Posterior cingulate gyrus (tissue), 11 donors: ENCODE measurements at regions of chr3 and their contacts with region 1.

Region 1: DNA sequence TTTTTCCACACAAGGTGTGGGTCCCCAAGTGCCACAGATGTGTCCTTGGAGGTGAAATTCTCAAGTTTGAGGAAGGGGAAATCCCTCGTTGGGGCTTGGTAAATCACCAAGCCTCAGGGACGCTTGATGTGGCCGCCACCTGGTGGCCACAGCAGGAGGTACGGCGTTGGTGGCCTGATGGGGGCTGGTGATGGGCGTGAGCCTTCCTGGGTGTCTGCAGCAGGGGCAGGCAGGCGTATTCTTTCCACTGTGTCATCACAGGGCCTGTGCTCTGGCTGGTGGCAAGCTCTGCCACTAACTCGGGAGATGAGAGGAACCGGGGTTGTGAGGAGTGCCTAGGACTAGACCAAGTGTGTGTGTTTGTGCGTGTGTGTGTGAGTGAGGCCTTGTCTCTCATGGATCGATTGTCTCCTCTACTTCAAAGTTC is 4.2 kb downstream of the ACOX2 start:
- DNase-seq: peak; percentile 49 to 96 (median 76)

Region 2: DNA sequence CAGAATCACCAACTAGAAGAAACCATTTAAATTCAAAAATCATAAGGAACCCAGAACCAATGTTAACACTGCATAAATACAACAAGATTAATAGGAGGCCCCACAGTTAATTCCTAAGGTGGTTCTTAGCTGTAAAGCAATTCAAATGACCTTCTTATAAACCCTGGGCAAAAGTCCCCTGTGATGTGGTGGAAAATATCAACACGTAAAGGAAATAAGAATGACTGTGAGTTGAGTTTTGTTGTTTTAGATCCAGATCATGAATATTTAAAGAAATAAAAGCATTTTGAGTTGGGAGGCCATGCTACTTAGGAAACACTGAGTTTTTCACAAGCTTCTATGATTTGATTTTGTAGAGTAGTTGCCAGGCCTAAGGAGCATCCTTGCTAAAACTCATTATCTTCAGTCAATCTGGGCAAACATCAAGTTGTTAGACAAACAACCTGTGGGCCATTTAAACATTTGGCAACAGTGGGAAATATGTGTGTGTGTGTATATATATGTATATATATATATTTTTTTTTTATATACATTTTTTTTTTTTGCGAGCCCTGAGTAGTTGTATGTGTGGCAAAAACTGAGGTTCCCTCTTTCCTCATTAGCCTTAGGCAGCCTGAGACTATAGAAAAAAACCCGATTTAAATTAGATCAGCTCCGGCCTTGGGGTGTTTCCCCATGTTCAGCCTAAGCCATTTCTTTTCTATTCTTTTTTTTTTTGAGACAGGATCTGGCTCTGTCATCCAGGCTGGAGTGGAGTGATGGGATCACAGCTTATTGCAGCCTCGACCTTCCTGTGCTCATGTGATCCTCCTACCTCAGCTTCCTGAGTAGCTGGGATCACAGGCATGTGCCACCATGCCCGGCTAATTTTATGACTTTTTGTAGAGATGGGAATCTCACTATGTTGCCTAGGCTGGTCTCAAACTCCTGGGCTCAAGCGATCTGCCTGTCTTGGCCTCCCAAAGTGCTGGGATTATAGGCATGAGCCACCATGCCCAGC is 208.1 kb before region 1 on chr3:
- intact Hi-C with region 1: loop called (anchors 5 kb)
- DNase-seq: no peak

Region 3: DNA sequence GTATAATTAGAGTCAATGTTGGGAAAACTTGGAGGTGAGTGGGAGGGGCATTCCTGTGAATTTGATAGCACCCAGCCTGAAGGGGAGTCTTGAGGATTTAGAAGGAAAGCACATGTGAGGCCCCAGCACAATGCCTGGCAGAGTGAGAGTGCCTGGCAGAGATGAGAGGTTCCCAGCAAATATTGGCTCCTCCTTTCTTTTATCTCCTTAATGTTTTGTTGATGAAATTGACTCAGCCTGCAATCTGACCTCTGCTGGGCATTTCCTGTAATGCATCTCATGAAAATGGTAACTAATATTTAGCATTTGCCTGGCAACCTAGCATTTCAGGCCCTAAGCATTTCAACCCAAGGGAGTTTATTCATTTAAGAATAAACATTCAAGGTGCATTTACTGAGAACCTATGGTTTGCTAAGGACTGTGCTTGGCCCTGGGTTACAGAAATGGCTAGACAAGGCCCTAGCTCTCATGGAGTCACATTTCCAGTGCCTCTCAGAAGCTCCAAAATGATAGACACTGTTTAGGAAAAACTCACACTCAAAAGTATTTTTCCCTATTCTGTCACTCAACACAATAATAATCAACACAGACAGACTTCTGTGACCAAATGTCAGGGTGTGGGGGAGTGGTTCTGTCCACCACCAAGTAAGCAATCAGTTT is 118.1 kb before region 1 on chr3:
- intact Hi-C with region 1: loop called (anchors 10 kb)
- DNase-seq: peak in 3 of 10 donors; percentile 27 to 65 (median 38)

Region 4: GRCh38 chr3:58463181-58463941 is 69.4 kb before region 1 on chr3:
- intact Hi-C with region 1: loop called (anchors 1 kb)
- DNase-seq: peak; percentile 50 to 95 (median 70)

Region 5: DNA sequence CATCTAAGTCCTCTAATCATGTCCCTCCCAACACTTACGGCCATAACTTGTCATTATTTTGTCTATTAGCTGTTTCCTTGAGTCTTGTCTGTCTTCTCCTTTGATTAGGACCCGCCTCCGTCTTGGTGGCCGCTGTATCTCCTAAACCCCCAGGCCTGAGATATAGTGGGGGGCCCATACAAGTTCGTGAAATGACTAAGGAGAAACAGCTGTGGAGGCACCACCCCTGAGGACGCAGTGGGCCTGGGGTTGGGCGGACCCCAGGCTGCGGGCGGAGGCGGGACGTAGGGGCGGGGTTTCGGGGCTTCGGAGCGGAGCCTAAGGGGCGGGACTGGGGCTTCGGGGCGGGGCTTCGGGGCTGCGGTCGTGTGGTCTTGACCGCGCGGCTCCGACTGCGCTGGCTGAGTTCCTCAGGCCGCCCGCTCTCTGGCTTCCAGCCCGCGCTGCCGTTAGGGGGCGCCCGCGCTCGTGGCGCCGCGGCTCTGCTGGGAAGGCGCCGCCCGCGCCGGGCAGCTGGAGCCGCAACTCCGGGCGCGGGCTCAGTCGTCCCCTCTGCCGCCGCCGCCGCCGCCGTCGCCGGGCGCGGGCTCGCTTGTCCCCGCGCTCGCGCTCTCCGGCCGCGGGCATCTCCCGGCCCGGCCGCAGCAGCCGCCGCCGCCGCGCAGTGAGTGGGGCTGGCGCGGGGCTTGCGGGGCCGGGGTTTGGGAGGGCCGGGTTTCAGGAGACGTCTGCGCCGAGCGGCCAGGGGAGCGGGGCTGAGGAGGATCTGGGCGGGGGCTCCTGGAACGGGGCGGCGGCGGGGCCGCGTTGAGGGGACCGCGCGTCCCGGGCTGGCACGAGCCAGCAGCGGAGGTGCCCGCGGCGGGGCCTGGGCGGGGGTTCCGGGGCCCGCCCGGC is 41.1 kb before region 1 on chr3 and contains the start of gene KCTD6:
- intact Hi-C with region 1: loop called (anchors 2 kb)
- DNase-seq: peak; percentile 79 to 98 (median 84)